Keratinocyte (primary cell): ENCODE measurements at regions of chr6 and their contacts with region 1.

Region 1: DNA sequence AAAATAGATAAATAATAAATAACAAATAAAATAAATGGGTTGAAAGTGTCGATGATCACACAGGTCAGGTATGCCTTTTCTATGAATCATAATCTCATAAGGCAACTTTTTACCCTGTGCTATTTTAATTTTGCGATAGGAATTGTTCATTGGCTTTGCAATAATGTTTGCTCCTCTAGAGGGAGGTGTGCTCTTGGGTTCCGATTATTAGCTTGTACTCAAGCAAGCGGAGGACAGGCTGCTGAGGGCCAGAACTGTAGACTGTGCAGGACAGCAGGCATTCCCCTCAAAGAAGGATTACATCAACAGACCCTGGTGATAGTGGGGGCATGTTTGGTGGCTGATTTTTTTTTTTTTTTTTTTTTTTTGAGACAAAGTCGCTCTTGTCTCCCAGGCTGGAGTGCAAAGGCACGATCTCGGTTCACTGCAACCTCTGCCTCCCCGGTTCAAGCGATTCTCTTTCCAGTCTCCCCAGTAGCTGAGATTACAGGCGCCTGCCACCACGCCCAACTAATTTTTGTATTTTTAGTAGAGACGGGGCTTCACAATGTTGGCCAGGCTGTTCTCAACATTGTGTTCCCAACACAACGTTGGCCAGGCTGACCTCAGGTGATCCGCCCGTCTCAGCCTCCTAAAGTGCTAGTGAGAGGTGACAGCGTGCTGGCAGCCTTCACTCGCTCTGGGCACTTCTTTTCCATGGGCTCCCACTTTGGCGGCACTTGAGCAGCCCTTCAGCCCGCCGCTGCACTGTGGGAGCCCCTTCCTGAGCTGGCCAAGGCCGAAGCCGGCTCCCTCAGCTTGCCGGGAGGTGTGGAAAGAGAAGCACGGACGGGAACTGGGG is 35.6 kb downstream of the RIOK1 start:
- DNase-seq: peak; percentile 66
- H3K4me3 ChIP-seq: no peak overlapping the region
- H3K27ac ChIP-seq: no peak overlapping the region
- H3K4me1 ChIP-seq: peaks cover 4% of the 10 kb centered on the region
- H3K27me3 ChIP-seq: no peaks in the 10 kb centered on the region
- CTCF ChIP-seq: peak; percentile 54 to 71 (median 70)

Region 2: DNA sequence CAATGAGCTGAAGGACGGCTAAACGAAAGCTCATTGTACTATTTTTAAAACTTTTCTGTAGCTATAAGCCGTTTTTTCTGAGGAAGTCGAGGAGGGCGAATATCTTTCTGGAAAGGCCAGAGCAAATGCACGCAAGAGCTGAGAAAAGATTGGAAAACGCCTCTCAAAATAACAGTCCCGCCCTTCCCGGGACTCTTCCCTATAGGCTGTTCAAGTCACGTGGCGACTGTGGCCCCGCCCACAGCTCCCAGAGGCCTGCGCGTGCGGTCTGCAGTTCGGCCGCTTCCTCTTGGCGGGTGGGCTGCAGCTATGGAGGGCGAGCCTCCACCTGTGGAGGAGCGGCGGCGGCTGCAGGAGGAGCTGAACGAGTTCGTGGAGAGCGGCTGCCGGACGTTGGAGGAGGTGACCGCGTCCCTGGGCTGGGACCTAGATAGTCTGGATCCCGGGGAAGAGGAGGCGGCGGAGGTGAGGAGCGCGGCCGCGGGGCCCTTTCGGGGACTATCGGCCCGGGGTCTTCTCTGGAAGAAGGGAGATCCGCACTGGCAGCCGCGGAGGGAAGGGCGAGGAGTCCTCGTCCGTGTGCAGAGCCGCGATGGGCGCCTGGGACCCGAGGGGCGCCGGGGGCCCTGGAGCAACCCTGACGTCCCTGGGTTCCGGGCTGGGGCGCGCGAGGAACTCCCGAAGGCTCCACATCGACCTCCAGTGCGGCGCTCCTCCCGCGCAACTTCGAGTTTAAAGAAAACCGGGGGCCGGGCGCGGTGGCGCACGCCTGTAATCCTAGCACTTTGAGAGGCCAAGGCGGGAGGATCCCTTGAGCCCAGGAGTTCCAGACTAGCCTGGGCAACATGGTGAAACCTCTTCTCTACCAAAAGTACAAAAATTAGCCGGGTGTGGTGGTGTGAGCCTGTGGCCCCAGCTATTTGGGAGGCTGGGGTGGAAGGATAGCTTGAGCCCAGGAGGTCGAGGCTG is 165.0 kb after region 1 on chr6 and contains the start of gene SNRNP48:
- dilution Hi-C with region 1: loop called (anchors 25 kb)
- DNase-seq: peak; percentile 48
- H3K4me3 ChIP-seq: peak within 1 kb of the TSS; percentile 65 to 93 (median 78)
- H3K27ac ChIP-seq: peak within 1 kb of the TSS; percentile 56
- H3K4me1 ChIP-seq: peaks cover 20% of the 10 kb centered on the region
- H3K27me3 ChIP-seq: no peaks in the 10 kb centered on the region
- CTCF ChIP-seq: no peak
- polyA plus RNA-seq, gene SNRNP48: 5.9 to 12.2 TPM (median 6.1 TPM) in 3 replicates